AG04450 (cell line): ENCODE measurements at regions of chr1 and their contacts with region 1.

Region 1: DNA sequence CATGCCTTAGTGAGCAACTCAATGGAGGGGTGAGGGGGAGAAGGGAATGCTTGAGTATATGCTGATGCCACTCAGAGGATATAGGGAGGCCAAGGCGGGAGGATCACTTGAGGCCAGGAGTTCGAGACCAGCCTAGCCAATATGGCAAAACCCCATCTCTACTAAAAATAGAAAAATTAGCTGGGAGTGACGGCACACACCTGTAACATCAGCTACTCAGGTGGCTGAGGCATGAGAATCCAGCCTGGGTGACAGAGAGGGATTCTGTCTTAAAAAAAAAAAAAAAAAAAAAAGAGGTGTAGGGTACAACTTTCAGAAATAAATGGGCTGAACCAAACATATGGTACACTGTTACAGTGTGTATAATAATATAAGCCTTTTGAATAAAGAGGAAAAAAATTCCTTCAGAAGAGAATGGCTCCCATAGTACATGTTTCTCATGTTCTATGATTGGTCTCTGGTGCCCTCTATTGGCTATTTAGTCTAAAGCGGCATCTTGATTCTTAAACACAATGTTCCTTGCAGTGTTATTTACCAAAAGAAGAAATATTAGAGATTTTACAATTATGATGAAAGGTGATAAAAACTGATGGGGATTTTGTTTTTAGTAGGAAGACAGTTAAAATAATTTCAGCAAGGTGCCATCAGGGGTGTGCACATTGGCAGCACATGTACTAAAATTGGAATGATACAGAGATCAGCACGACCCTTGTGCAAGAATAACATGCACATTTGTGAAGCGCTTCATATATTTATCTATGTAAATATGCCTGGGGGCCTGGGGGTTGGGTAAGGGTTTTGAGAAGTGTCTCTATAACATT is 109.8 kb downstream of the PATJ start:
- DNase-seq: peak; percentile 58
- H3K4me3 ChIP-seq: no peak overlapping the region
- H3K27ac ChIP-seq: no peak overlapping the region
- H3K27me3 ChIP-seq: peaks cover 3% of the 10 kb centered on the region
- CTCF ChIP-seq: peak; percentile 78

Region 2: DNA sequence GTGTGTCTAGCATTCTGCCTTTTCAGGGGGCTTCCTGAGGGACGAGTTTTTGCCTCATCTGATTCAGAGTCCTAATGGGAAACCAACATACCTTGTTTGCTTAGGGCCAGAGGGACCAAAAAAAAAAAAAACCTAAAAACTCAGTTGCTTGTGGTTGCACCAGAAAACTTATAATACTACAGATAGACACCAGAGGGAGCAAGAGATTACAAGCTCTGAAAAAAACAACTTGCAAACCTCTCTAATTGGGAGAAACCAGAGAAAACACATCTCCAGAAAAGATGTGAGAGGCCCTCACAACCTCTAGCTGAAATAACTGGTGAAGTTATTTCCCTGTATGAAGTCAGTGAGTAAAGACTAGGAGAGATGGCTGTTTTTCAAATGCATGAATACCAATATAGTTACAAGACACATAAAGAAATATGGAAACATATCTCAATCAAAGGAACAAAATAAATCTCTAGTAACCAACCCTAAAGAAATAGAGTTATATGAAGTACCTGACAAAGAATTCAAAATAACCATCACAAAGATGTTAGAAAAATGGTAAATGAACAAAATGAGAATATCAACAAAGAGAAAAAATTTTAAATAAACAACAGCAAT is 1003.4 kb before region 1 on chr1:
- CTCF ChIA-PET with region 1: interaction called, 57 read pairs
- POLR2A ChIA-PET with region 1: no interaction called
- DNase-seq: no peak
- H3K4me3 ChIP-seq: no peak overlapping the region
- H3K27ac ChIP-seq: no peak overlapping the region
- H3K27me3 ChIP-seq: no peaks in the 10 kb centered on the region
- CTCF ChIP-seq: peak; percentile 63

Region 3: GRCh38 chr1:60978421-60979357 is 873.4 kb before region 1 on chr1:
- CTCF ChIA-PET with region 1: interaction called, 15 read pairs
- POLR2A ChIA-PET with region 1: no interaction called
- DNase-seq: no peak
- H3K4me3 ChIP-seq: no peak overlapping the region
- H3K27ac ChIP-seq: no peak overlapping the region
- H3K27me3 ChIP-seq: no peaks in the 10 kb centered on the region
- CTCF ChIP-seq: peak; percentile 79

Region 4: DNA sequence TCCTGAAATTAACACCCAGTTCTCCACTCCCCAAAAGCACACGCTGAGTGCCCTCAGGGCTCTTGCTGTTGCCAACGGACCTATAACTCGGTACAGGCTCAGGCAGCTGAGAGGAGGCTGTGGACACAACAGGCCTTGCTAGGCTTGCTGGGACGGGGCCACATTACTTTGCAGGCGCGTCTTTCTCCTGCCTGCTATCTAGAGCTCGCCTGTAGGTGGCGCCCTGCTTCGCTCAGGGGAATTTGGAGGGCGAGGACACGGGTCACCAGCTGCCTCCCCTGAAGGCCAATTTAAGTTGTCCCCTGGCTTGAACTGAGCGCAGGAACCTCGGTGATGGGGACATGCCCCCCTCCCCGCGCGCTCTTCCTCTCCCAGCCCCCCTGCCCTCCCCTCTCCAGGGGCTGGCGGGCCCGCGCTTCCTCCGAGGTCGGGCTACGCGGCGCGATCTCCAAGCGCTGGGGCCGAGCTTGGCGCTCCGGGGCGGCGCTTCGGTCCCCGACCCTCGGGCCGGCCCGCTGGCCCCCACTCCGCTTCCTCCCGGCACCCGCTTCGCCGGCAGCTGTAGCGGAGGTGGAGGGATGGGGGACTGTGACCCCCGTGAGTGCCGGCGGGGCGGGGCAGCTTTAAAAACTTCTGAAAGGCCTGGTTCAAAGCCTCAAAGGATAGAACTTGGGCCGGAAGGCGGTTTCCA is 802.1 kb before region 1 on chr1:
- CTCF ChIA-PET with region 1: interaction called, 11 read pairs
- POLR2A ChIA-PET with region 1: no interaction called
- DNase-seq: peak; percentile 46
- H3K4me3 ChIP-seq: peak overlapping the region; percentile 64
- H3K27ac ChIP-seq: no peak overlapping the region
- H3K27me3 ChIP-seq: peaks cover 41% of the 10 kb centered on the region
- CTCF ChIP-seq: peak; percentile 97

Region 5: GRCh38 chr1:61472876-61473275 is 379.2 kb before region 1 on chr1:
- CTCF ChIA-PET with region 1: no interaction called
- POLR2A ChIA-PET with region 1: no interaction called
- DNase-seq: no peak
- H3K4me3 ChIP-seq: no peak overlapping the region
- H3K27ac ChIP-seq: no peak overlapping the region
- H3K27me3 ChIP-seq: no peaks in the 10 kb centered on the region
- CTCF ChIP-seq: no peak

Region 6: GRCh38 chr1:61659061-61659460 is 193.0 kb before region 1 on chr1:
- CTCF ChIA-PET with region 1: no interaction called
- POLR2A ChIA-PET with region 1: interaction called, 11 read pairs
- DNase-seq: no peak
- H3K4me3 ChIP-seq: no peak overlapping the region
- H3K27ac ChIP-seq: no peak overlapping the region
- H3K27me3 ChIP-seq: no peaks in the 10 kb centered on the region
- CTCF ChIP-seq: 0 out of 2 replicates have a peak, but pooled peaks have one; percentile 6